PC-3 (cell line): ENCODE measurements at regions of chr3 and their contacts with region 1.

Region 1: GRCh38 chr3:182909318-182910040 is 70.9 kb downstream of the DCUN1D1 start:
- DNase-seq: peak; percentile 38
- ATAC-seq: peak; percentile 51
- H3K4me3 ChIP-seq: no peak overlapping the region
- H3K27ac ChIP-seq: no peak overlapping the region
- H3K4me1 ChIP-seq: 0 out of 2 replicates have a peak, but pooled peaks cover 3% of the 10 kb centered on the region
- H3K27me3 ChIP-seq: no peaks in the 10 kb centered on the region
- CTCF ChIP-seq: peak; percentile 77

Region 2: GRCh38 chr3:182713743-182714517 is 195.5 kb before region 1 on chr3:
- CTCF ChIA-PET with region 1: interaction called, 4 read pairs
- POLR2A ChIA-PET with region 1: no interaction called
- intact Hi-C with region 1: loop called (anchors 5 kb)
- DNase-seq: peak; percentile 81
- ATAC-seq: peak; percentile 72
- H3K4me3 ChIP-seq: no peak overlapping the region
- H3K27ac ChIP-seq: no peak overlapping the region
- H3K4me1 ChIP-seq: 0 out of 2 replicates have a peak, but pooled peaks cover 3% of the 10 kb centered on the region
- H3K27me3 ChIP-seq: no peaks in the 10 kb centered on the region
- CTCF ChIP-seq: peak; percentile 74

Region 3: GRCh38 chr3:182879031-182879611 is 30.4 kb before region 1 on chr3:
- CTCF ChIA-PET with region 1: no interaction called
- POLR2A ChIA-PET with region 1: no interaction called
- intact Hi-C with region 1: no loop called
- DNase-seq: peak; percentile 7
- ATAC-seq: peak; percentile 46
- H3K4me3 ChIP-seq: no peak overlapping the region
- H3K27ac ChIP-seq: no peak overlapping the region
- H3K4me1 ChIP-seq: no peaks in the 10 kb centered on the region
- H3K27me3 ChIP-seq: no peaks in the 10 kb centered on the region
- CTCF ChIP-seq: no peak

Region 4: GRCh38 chr3:182889948-182890629 is 19.4 kb before region 1 on chr3:
- CTCF ChIA-PET with region 1: interaction called, 15 read pairs
- POLR2A ChIA-PET with region 1: interaction called, 3 read pairs
- intact Hi-C with region 1: no loop called
- DNase-seq: peak; percentile 76
- ATAC-seq: peak; percentile 85
- H3K4me3 ChIP-seq: peak overlapping the region; percentile 4; the same call in 1 of the 2 replicates
- H3K27ac ChIP-seq: peak overlapping the region; percentile 11
- H3K4me1 ChIP-seq: peaks cover 39% of the 10 kb centered on the region
- H3K27me3 ChIP-seq: no peaks in the 10 kb centered on the region
- CTCF ChIP-seq: no peak

Region 5: DNA sequence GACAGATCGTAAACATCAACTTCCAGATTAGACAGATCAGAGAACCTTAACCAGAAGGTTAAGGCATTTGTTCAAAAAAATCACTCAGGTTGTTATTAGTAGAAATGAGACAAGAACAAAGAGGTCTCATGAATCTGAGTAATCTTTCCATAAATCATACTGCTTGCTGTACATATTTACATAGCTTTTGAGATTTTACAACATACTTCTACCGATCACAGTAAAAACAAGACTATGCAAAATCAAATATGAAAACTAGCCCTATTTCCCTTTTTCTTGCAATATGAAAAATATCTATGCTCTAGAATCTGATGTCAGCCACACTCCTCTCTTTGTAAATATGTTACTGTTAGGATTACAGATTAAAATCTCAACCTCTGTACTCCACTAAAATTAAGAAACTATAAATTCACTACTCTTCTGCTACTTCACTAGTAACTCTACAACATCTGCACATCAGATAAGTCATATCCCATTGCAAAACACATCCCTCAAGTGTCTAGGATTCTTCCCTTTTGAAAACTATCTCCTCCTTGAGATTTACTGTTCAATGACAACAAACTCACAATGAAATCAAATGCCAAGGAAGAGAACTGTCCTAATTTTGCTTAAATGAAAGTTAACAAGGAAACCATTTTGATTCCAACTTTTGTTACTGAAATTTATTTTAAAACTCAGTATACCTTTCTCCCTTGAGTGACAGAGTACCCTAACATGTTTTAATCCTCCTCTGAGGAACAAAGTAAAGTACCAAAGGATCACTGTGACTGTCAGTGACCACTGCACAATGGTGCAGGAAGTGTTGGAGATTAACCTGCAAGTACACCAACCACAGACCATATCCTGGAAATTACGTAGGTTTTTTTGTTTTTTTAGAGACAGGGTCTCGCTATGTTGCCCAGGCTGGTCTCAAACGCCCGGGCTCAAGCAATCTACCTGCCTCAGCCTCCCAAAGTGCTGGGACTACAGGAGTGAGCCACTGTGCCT is 58.0 kb after region 1 on chr3:
- CTCF ChIA-PET with region 1: no interaction called
- POLR2A ChIA-PET with region 1: no interaction called
- intact Hi-C with region 1: loop called (anchors 5 kb)
- DNase-seq: no peak
- ATAC-seq: peak; percentile 77
- H3K4me3 ChIP-seq: no peak overlapping the region
- H3K27ac ChIP-seq: peak overlapping the region; percentile 8; the same call in 1 of the 2 replicates
- H3K4me1 ChIP-seq: peaks cover 43% of the 10 kb centered on the region
- H3K27me3 ChIP-seq: no peaks in the 10 kb centered on the region
- CTCF ChIP-seq: no peak

Region 6: DNA sequence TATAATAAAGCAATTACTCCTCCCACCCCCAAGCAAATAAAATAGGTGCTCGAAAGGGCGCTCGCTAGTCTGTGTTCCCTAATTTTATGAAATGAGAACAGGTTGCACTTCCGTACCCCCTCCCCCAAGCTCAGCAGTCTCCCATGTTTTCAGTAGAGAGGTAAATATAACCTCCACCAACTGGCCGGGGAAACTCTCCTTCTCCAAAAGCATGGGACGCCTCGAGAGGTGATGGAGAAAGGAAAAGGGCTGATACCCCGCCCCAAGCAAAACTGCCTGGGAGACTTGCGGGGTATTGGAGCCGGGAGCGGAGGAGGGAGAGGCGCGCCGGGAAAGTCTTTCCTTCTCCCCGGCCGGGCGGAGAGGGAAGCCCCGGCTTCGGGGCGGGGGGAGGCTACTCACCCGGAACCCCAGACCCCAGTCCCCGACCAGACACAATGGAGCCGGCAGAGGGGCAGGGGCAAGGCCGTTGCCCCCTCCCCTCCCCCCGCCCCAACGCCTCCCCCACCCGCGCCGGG is 70.3 kb after region 1 on chr3:
- CTCF ChIA-PET with region 1: no interaction called
- POLR2A ChIA-PET with region 1: no interaction called
- intact Hi-C with region 1: loop called (anchors 2 kb)
- DNase-seq: peak; percentile 37
- ATAC-seq: peak; percentile 31
- H3K4me3 ChIP-seq: peak overlapping the region; percentile 83
- H3K27ac ChIP-seq: no peak overlapping the region
- H3K4me1 ChIP-seq: peaks cover 14% of the 10 kb centered on the region
- H3K27me3 ChIP-seq: no peaks in the 10 kb centered on the region
- CTCF ChIP-seq: no peak

Region 7: DNA sequence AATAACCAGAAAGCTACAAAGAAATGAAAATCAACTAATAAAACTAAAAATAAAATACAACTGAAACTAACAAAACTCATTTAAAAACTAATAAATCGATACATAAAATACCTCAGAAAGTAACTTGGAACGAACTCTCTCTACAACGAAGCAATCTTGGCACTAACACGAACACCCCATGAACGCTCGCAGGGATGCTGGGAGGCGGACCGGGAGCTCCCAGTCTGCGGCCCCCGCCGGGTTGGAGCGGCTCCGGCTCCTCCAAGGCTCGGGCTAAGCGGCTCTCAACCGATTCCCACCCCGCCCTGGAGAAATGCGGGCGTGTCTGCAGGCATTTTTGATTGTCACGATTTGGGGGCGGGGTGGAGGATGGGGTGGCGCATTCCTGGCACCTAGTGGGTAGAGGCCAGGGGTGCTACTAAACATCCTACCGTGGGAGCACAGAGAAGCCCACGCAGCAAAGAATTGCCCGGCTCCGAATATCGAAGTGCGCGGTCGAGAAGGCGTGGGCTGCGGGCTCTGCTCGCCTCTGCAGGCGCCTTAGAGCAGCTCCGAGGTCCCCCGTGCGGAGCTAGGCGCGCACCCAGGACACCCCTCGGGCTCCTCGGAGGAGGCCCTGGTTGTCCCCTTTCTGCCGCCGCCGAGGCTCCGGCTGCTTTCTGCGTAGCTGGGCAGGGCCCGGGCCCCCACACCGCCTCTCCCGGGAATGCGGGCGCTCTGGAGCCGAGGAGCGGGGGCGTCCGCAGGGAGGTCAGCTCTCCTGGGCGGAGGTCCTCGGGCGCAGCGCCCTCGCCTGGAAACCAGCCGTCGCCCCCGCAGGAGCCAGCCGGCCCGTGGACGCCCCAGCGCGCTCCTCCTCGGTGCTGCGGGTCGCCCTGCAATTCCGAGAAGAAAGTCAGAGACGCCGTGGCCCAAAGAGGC is 269.4 kb after region 1 on chr3:
- CTCF ChIA-PET with region 1: no interaction called
- POLR2A ChIA-PET with region 1: no interaction called
- intact Hi-C with region 1: loop called (anchors 5 kb)
- DNase-seq: peak; percentile 70
- ATAC-seq: peak; percentile 61
- H3K4me3 ChIP-seq: peak overlapping the region; percentile 85
- H3K27ac ChIP-seq: no peak overlapping the region
- H3K4me1 ChIP-seq: peaks cover 17% of the 10 kb centered on the region; the same call in 1 of the 2 replicates
- H3K27me3 ChIP-seq: no peaks in the 10 kb centered on the region
- CTCF ChIP-seq: peak; percentile 60